Tibial artery (tissue), 4 donors: ENCODE measurements at regions of chr2 and their contacts with region 1.

Region 1: GRCh38 chr2:72985895-72986683 is 68.8 kb downstream of the EMX1 start:
- DNase-seq: peak in 1 of 2 donors; percentile 33
- H3K4me3 ChIP-seq: no peak overlapping the region
- H3K27ac ChIP-seq: no peak overlapping the region
- H3K4me1 ChIP-seq: peaks cover 0 to 10% (median 6%) of the 10 kb centered on the region in 4 donors
- H3K27me3 ChIP-seq: no peaks in the 10 kb centered on the region
- CTCF ChIP-seq: no peak

Region 2: DNA sequence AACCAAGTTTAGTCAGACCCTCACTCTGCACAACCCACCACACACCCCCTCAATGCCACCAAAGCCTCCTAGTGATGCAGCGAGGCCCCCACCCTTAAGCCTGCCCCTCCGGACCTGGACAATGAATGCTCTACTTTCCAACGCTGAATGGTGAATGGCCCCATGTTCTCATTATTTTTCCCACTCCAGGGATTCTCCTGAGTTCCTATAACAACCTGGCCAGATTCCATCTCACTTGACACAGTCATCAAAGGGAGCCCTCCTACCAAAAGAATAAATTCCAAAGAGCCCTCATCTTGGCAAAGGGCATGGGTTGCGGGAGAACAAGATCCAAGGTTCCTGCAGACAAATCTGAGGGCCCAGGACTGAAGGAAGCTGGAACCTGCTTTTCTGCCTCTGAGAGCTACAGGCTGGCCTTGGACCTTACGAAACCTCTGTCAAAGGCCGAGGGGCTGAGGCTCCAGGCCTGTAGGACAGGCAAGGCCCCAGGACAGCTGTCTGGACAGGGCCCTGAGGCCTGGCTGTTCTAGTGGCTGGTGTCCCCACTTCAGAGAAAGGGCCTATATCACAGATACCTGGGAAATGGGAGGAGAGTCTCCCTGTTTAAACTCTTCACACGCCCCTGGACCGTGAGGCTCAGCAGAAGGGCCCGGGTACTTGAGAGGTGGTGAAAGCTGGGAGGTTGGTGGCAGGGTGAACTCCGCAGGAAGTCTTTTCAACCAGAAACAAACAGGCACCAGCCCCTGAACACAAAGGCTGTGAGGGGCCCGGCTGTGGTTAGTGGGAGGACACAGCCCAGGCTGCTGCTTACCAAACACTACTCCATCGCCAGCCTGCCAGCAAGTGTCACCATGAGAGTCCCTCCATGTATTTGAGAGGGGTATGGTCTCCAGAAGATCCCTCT is 58.1 kb after region 1 on chr2:
- intact Hi-C with region 1: loop called (anchors 2 kb)
- DNase-seq: no peak
- H3K4me3 ChIP-seq: no peak overlapping the region
- H3K27ac ChIP-seq: no peak overlapping the region
- H3K4me1 ChIP-seq: no peaks in the 10 kb centered on the region
- H3K27me3 ChIP-seq: no peaks in the 10 kb centered on the region
- CTCF ChIP-seq: no peak